Caco-2 (cell line): ENCODE measurements at regions of chr3 and their contacts with region 1.

Region 1: GRCh38 chr3:46542801-46543201 is 23.3 kb downstream of the LRRC2 start:
- DNase-seq: no peak
- H3K4me3 ChIP-seq: no peak overlapping the region
- H3K4me3 Mint-ChIP-seq: no peak overlapping the region
- H3K27ac Mint-ChIP-seq: no peak overlapping the region
- H3K4me1 ChIP-seq: no peaks in the 10 kb centered on the region
- H3K4me1 Mint-ChIP-seq: peaks cover 14% of the 10 kb centered on the region
- H3K27me3 ChIP-seq: no peaks in the 10 kb centered on the region
- H3K27me3 Mint-ChIP-seq: no peaks in the 10 kb centered on the region
- CTCF ChIP-seq: no peak

Region 2: GRCh38 chr3:46504789-46505188 is 38.0 kb before region 1 on chr3:
- CTCF ChIA-PET with region 1: no interaction called
- POLR2A ChIA-PET with region 1: no interaction called
- intact Hi-C with region 1: loop called (anchors 5 kb)
- DNase-seq: no peak
- H3K4me3 ChIP-seq: no peak overlapping the region
- H3K4me3 Mint-ChIP-seq: no peak overlapping the region
- H3K27ac Mint-ChIP-seq: no peak overlapping the region
- H3K4me1 ChIP-seq: no peaks in the 10 kb centered on the region
- H3K4me1 Mint-ChIP-seq: no peaks in the 10 kb centered on the region
- H3K27me3 ChIP-seq: no peaks in the 10 kb centered on the region; the same call in 1 of the 2 replicates
- H3K27me3 Mint-ChIP-seq: no peaks in the 10 kb centered on the region
- CTCF ChIP-seq: no peak